ENCODE measurements at regions of chr15 and their contacts with region 1.

Region 1: GRCh38 chr15:79896637-79897379 is at the start of gene MTHFS:
- DNase-seq: peak; percentile 78 to 89
- ATAC-seq: peak; percentile 94 to 97 (median 96)
- H3K4me3 ChIP-seq: peak within 1 kb of the TSS; percentile 86
- H3K27ac ChIP-seq: peak within 1 kb of the TSS; percentile 92
- H3K4me1 ChIP-seq: no peaks in the 10 kb centered on the region
- H3K27me3 ChIP-seq: no peaks in the 10 kb centered on the region
- CTCF ChIP-seq: peak; percentile 33
- total RNA-seq, gene MTHFS: 7.8 to 17.1 (median 15.2) TPM

Region 2: DNA sequence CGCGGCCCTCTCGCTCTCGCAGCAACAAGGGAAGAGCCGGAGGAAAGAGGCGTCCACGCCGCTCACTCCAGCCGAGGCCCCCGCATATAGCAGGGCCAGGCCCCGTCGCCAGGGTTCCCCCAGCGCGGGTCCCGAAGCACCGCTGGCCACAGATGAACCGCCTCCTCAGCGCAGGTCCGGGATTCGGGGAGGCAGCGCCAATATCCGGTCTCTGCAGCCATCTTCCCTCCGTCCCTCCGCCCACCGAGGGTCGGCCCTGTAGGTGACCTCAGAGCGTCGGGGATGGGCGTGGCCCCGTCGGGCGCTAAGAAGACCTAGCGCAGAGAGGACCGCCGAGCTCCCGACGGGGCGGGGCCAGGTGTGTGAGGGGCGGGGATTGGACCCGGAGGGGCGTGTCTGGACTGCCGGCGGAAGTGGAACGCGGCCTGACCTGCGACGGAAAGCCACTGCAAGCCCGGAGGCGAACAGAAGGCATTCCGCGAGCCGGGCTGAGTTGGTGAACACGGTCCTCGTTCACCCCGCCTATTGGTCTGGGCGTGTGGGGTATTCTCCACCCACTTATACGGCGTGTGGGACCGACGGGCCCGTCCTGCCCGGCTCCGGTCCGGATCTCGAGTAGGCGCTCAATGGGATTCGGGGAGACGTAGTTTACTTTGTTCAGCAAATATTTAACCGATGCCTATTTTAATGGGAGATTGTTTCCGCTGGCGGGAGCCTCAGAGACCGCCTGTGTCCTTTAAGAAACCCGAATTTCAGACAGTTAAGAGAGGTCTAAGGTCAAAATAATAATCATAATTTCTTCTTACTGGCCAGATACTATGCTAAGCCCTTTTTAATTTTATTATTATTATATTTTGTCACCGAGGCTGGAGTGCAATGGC is 26.9 kb after region 1 on chr15:
- intact Hi-C with region 1: loop called in 1 of 2 experiments (anchors 2 kb)
- DNase-seq: peak; percentile 93 to 94
- ATAC-seq: peak; percentile 98 to 99 (median 99)
- H3K4me3 ChIP-seq: peak overlapping the region; percentile 84
- H3K27ac ChIP-seq: peak overlapping the region; percentile 91
- H3K4me1 ChIP-seq: no peaks in the 10 kb centered on the region
- H3K27me3 ChIP-seq: no peaks in the 10 kb centered on the region
- CTCF ChIP-seq: no peak

Region 3: DNA sequence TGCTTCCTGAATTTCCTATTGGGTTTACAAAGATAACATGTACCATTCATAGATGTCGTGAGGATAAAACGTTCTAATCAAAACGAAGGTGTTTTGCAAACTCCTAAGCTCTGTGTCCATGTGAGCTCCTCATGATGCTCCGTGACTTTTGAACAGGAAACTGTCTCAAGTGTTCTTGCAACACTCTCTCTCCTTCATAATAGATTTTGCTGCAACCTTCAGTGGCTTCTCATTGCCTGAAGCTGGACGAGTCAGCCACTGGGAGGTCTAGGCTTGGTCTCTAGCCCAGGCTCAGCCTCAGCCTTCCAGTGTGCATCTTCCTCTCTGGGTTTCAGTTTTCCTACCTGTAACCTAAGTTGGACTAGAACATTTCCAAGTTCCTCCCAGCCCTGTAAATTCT is 92.9 kb after region 1 on chr15:
- intact Hi-C with region 1: loop called in 1 of 2 experiments (anchors 10 kb)
- DNase-seq: no peak
- ATAC-seq: no peak
- H3K4me3 ChIP-seq: no peak overlapping the region
- H3K27ac ChIP-seq: no peak overlapping the region
- H3K4me1 ChIP-seq: no peaks in the 10 kb centered on the region
- H3K27me3 ChIP-seq: no peaks in the 10 kb centered on the region
- CTCF ChIP-seq: no peak

Region 4: GRCh38 chr15:80058851-80059785 is 162.3 kb after region 1 on chr15 and contains the start of gene ZFAND6:
- intact Hi-C with region 1: loop called in 1 of 2 experiments (anchors 10 kb)
- DNase-seq: peak; percentile 95 to 98
- ATAC-seq: peak; percentile 97 to 98 (median 98)
- H3K4me3 ChIP-seq: peak within 1 kb of the TSS; percentile 84
- H3K27ac ChIP-seq: peak within 1 kb of the TSS; percentile 97
- H3K4me1 ChIP-seq: peaks cover 25% of the 10 kb centered on the region
- H3K27me3 ChIP-seq: no peaks in the 10 kb centered on the region
- CTCF ChIP-seq: no peak
- total RNA-seq, gene ZFAND6: 66.3 to 102 (median 86.8) TPM

Region 5: GRCh38 chr15:80152180-80152845 is 255.5 kb after region 1 on chr15:
- intact Hi-C with region 1: loop called in 1 of 2 experiments (anchors 5 kb)
- DNase-seq: peak; percentile 98 to 99
- ATAC-seq: peak; percentile 86 to 92 (median 88)
- H3K4me3 ChIP-seq: peak overlapping the region; percentile 75
- H3K27ac ChIP-seq: peak overlapping the region; percentile 88
- H3K4me1 ChIP-seq: peaks cover 35% of the 10 kb centered on the region
- H3K27me3 ChIP-seq: no peaks in the 10 kb centered on the region
- CTCF ChIP-seq: no peak

Region 6: GRCh38 chr15:80173022-80173759 is 276.4 kb after region 1 on chr15:
- intact Hi-C with region 1: loop called (anchors 2 to 10 kb)
- DNase-seq: peak; percentile 44 to 78
- ATAC-seq: peak; percentile 29 to 77 (median 70)
- H3K4me3 ChIP-seq: no peak overlapping the region
- H3K27ac ChIP-seq: peak overlapping the region; percentile 84
- H3K4me1 ChIP-seq: peaks cover 23% of the 10 kb centered on the region
- H3K27me3 ChIP-seq: no peaks in the 10 kb centered on the region
- CTCF ChIP-seq: peak; percentile 71